ENCODE measurements at regions of chr12 and their contacts with region 1.

Region 1: DNA sequence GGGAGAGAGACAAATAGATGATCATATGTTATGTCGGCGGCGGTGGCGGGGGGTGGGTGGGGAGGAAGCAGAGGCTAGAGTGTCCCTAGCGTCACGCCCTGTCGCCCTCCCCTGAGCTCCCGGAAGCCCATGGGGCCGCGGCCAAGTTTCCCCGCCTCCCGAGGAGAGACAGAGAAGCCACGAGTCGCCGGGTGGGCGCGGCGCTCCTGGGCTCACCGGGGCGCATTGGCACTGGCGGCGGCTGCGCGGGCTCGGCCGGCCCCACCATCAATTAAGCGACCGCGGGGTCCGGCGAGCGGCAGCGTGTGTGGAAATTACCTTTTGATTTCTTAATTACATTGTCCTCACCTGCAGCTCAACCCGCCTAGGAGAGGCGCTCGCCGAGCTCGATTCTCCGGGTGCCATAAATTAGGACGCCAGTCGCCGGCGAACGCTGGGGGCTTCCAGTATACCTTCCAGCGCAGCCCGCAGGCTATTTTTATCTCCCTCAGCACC is 119.9 kb upstream of the LHX5 start:
- DNase-seq: peak; percentile 93 to 95 (median 94)
- ATAC-seq: peak; percentile 98
- H3K4me3 ChIP-seq: peak overlapping the region; percentile 49
- H3K27ac ChIP-seq: no peak overlapping the region
- H3K4me1 ChIP-seq: peaks cover 4 to 12% of the 10 kb centered on the region in 2 experiments; a peak in 3 of 5 replicates
- H3K27me3 ChIP-seq: peaks cover 0 to 8% of the 10 kb centered on the region in 2 experiments; a peak in 1 of 5 replicates
- CTCF ChIP-seq: peak in 1 of 3 experiments; percentile 4; a peak in 1 of 6 replicates
- EP300 ChIP-seq: no peak
- POLR2A ChIP-seq: peak; percentile 59
- RAD21 ChIP-seq: no peak; a peak in 2 of 4 replicates

Region 2: GRCh38 chr12:113479590-113480335 is 111.8 kb before region 1 on chr12:
- CTCF ChIA-PET with region 1: no interaction called
- POLR2A ChIA-PET with region 1: no interaction called
- in situ Hi-C with region 1: no loop called
- intact Hi-C with region 1: no loop called
- DNase-seq: peak; percentile 71 to 83 (median 78)
- ATAC-seq: peak; percentile 84
- H3K4me3 ChIP-seq: no peak overlapping the region
- H3K27ac ChIP-seq: no peak overlapping the region
- H3K4me1 ChIP-seq: peaks cover 0 to 8% of the 10 kb centered on the region in 2 experiments; a peak in 2 of 5 replicates
- H3K27me3 ChIP-seq: peaks cover 24 to 43% of the 10 kb centered on the region in 2 experiments; a peak in 4 of 5 replicates
- CTCF ChIP-seq: no peak
- EP300 ChIP-seq: no peak
- POLR2A ChIP-seq: no peak
- RAD21 ChIP-seq: no peak

Region 3: GRCh38 chr12:113601656-113602263 is 10.2 kb after region 1 on chr12:
- CTCF ChIA-PET with region 1: no interaction called
- POLR2A ChIA-PET with region 1: interaction called, 11 read pairs
- in situ Hi-C with region 1: no loop called
- intact Hi-C with region 1: no loop called
- DNase-seq: peak; percentile 48 to 62 (median 57)
- ATAC-seq: peak; percentile 79
- H3K4me3 ChIP-seq: no peak overlapping the region
- H3K27ac ChIP-seq: no peak overlapping the region
- H3K4me1 ChIP-seq: no peaks in the 10 kb centered on the region
- H3K27me3 ChIP-seq: peaks cover 0 to 15% of the 10 kb centered on the region in 2 experiments; a peak in 3 of 5 replicates
- CTCF ChIP-seq: no peak
- EP300 ChIP-seq: no peak
- POLR2A ChIP-seq: no peak
- RAD21 ChIP-seq: no peak

Measured in K562 (cell line).